Caco-2 (cell line): ENCODE measurements at regions of chr15 and their contacts with region 1.

Region 1: DNA sequence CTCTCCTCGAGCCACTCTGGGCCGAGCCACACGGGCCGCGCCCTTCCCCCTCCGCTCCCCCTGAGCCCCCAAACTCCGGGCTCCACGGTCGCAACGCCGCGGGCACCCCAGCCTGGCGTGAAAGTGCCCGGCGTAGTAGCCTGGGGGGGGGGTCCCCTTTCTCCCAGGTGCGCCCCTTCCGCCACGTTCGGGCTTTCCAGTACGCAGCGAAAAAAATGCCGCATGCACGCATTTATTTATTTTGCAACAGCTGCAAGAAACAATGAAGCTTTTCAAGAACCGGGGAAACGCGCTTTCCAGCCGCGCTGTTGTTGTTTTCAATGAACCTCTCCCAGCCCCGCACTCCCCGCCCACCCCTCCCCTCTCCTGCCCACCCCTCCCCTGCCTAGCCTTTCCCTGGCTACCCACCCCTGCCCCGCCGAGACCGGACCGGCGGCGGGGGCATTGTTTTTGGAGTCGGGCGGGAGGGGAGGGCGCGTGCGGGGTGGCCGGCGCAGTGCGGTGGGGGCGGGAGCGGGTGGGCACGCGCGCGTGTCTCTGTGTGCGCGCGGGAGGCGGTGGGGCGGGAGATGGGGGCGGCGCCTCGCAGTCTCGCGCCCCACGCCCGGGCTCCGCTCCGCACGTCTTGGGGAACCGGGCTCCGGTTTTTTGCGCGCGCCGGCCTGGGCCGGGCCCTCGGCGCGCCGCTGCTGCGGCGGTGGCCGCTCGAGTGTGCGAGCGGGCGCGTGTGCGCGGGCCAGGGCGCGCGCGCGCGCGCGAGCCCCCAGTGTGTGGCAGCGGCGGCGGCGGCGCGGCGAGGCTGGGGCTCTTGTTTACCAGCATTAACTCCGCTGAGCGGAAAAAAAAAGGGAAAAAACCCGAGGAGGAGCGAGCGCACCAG is at the start of gene IGF1R:
- DNase-seq: peak; percentile 81 to 93
- H3K4me3 ChIP-seq: peak within 1 kb of the TSS; percentile 83
- H3K4me3 Mint-ChIP-seq: peak within 1 kb of the TSS; percentile 93
- H3K27ac Mint-ChIP-seq: peak within 1 kb of the TSS; percentile 91
- H3K4me1 ChIP-seq: peaks cover 17% of the 10 kb centered on the region
- H3K4me1 Mint-ChIP-seq: peaks cover 11% of the 10 kb centered on the region
- H3K27me3 ChIP-seq: no peaks in the 10 kb centered on the region
- H3K27me3 Mint-ChIP-seq: peaks cover 5% of the 10 kb centered on the region
- CTCF ChIP-seq: no peak
- total RNA-seq, gene IGF1R: 51.6 and 57.4 TPM in 2 replicates

Region 2: GRCh38 chr15:98568382-98569017 is 79.5 kb before region 1 on chr15:
- CTCF ChIA-PET with region 1: interaction called, 8 read pairs
- POLR2A ChIA-PET with region 1: no interaction called
- intact Hi-C with region 1: loop called (anchors 5 kb)
- DNase-seq: no peak
- H3K4me3 ChIP-seq: no peak overlapping the region
- H3K4me3 Mint-ChIP-seq: no peak overlapping the region
- H3K27ac Mint-ChIP-seq: no peak overlapping the region
- H3K4me1 ChIP-seq: no peaks in the 10 kb centered on the region
- H3K4me1 Mint-ChIP-seq: no peaks in the 10 kb centered on the region
- H3K27me3 ChIP-seq: no peaks in the 10 kb centered on the region
- H3K27me3 Mint-ChIP-seq: peaks cover 16% of the 10 kb centered on the region
- CTCF ChIP-seq: peak; percentile 50 to 80

Region 3: DNA sequence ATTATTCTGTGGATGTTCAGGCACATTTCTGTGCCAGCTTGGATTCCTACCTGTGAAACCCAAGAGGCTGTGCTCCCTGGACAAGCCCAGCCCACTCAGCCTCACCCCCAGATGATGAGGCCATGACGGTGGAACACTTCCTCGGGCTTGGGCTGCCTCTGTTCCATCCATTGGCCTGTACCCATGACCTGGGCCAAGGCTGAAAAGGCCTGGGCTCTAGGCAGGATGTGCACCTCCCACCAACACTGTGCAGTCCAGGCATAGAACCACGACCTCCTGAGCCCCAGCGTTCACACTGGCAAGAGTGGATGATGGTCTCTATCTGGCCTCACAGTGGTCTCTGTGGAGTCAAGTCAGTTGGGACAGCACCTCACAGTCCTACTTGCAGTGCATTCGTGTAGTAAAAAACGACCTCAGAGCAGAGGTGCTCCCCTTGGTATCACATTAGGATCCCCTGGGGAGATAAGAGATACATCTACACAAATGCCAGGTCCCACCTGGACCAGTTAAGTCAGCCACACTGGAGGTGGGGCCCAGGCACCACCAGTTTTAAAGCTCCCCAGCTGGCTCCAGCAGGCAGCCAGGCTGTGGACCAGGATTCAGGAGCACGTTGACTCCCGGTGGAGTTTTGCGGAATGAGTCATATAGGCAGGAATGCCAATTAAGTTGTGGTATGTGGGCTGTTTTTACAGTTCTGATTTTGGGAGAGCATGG is 38.7 kb before region 1 on chr15:
- CTCF ChIA-PET with region 1: no interaction called
- POLR2A ChIA-PET with region 1: interaction called, 6 read pairs
- intact Hi-C with region 1: loop called (anchors 5 kb)
- DNase-seq: peak; percentile 45 to 63
- H3K4me3 ChIP-seq: no peak overlapping the region
- H3K4me3 Mint-ChIP-seq: no peak overlapping the region
- H3K27ac Mint-ChIP-seq: peak overlapping the region; percentile 46
- H3K4me1 ChIP-seq: peaks cover 10% of the 10 kb centered on the region
- H3K4me1 Mint-ChIP-seq: peaks cover 6% of the 10 kb centered on the region
- H3K27me3 ChIP-seq: no peaks in the 10 kb centered on the region
- H3K27me3 Mint-ChIP-seq: no peaks in the 10 kb centered on the region
- CTCF ChIP-seq: no peak

Region 4: GRCh38 chr15:98719137-98719740 is 71.2 kb after region 1 on chr15:
- CTCF ChIA-PET with region 1: no interaction called
- POLR2A ChIA-PET with region 1: no interaction called
- intact Hi-C with region 1: loop called (anchors 5 kb)
- DNase-seq: peak; percentile 27 to 49
- H3K4me3 ChIP-seq: no peak overlapping the region
- H3K4me3 Mint-ChIP-seq: peak overlapping the region; percentile 20
- H3K27ac Mint-ChIP-seq: peak overlapping the region; percentile 82
- H3K4me1 ChIP-seq: peaks cover 69% of the 10 kb centered on the region
- H3K4me1 Mint-ChIP-seq: peaks cover 70% of the 10 kb centered on the region
- H3K27me3 ChIP-seq: no peaks in the 10 kb centered on the region
- H3K27me3 Mint-ChIP-seq: no peaks in the 10 kb centered on the region
- CTCF ChIP-seq: no peak

Region 5: GRCh38 chr15:98896802-98897732 is 249.1 kb after region 1 on chr15:
- CTCF ChIA-PET with region 1: no interaction called
- POLR2A ChIA-PET with region 1: no interaction called
- intact Hi-C with region 1: loop called (anchors 2 kb)
- DNase-seq: peak; percentile 70 to 76
- H3K4me3 ChIP-seq: no peak overlapping the region
- H3K4me3 Mint-ChIP-seq: peak overlapping the region; percentile 66
- H3K27ac Mint-ChIP-seq: peak overlapping the region; percentile 95
- H3K4me1 ChIP-seq: peaks cover 57% of the 10 kb centered on the region
- H3K4me1 Mint-ChIP-seq: peaks cover 40% of the 10 kb centered on the region
- H3K27me3 ChIP-seq: no peaks in the 10 kb centered on the region
- H3K27me3 Mint-ChIP-seq: no peaks in the 10 kb centered on the region
- CTCF ChIP-seq: no peak